A673 (cell line): ENCODE measurements at regions of chr10 and their contacts with region 1.

Region 1: DNA sequence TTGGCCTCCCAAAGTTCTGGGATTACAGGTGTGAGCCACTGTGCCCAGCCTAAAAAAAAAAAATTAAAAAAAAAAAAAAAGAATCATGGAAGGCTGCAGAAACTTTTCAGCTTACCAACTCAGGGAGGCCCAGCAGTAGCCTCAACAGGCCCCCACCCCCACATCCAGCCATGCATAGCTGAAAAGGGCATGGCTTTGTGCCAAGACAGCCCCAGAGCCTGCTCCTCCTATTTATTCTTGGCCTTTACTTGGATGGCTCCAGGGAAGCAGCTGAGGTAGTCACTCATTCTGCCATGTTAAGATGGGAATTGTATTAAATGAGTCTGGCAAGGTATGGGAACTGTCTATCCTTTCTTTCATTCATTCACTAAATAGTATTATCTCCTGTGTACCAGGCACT is 13.7 kb upstream of the CNNM2 start:
- DNase-seq: no peak
- H3K4me3 ChIP-seq: no peak overlapping the region
- H3K27ac ChIP-seq: no peak overlapping the region
- H3K4me1 ChIP-seq: no peaks in the 10 kb centered on the region
- H3K27me3 ChIP-seq: no peaks in the 10 kb centered on the region
- CTCF ChIP-seq: no peak

Region 2: DNA sequence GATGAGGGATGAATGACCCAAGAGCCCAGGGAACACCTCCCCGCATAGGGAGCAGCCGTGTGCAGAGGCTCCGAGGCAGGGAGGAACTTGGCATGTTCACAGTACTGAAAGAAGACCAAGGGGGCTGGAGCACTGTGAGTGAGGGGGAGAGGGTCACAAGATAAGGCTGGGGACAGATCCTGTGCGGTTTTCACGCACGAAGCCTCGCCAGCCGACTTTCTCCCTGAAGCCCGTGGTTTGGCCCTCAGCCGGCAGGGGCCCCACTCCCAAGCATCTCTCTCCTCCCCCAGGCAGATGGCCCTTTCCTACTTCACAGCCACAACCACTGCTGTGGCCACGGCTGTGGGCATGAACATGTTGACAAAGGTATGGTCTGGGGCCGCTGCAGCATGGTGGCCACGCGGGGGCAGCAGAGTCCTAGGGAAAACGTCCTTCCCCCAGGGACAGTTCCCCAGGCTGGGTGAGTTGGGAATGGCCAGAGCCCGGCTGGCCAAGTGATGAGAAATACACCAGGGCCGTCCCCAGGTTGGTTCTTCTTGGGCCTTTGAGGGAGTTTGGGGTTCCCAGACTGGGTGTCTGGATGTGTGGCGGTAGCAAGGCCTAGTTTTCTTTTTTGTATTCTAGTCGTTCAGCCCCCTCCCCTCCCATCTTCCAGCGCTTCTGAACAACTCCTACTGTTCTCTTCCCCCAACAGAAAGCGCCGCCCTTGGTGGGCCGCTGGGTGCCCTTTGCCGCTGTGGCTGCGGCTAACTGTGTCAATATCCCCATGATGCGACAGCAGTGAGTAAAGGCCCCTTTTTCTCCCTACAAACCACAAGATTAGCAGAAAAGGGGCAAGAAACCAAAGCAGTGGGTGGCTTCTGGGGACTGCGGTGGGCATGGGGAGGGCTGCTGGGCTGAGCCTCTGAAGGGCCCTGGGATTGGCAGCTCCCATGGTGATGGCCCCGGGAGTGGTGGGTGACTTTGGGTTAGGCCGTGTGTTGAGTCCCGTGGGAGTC is 175.0 kb before region 1 on chr10:
- CTCF ChIA-PET with region 1: no interaction called
- POLR2A ChIA-PET with region 1: no interaction called
- intact Hi-C with region 1: loop called (anchors 2 kb)
- DNase-seq: peak; percentile 78
- H3K4me3 ChIP-seq: no peak overlapping the region
- H3K27ac ChIP-seq: no peak overlapping the region
- H3K4me1 ChIP-seq: no peaks in the 10 kb centered on the region
- H3K27me3 ChIP-seq: no peaks in the 10 kb centered on the region
- CTCF ChIP-seq: peak; percentile 94

Region 3: DNA sequence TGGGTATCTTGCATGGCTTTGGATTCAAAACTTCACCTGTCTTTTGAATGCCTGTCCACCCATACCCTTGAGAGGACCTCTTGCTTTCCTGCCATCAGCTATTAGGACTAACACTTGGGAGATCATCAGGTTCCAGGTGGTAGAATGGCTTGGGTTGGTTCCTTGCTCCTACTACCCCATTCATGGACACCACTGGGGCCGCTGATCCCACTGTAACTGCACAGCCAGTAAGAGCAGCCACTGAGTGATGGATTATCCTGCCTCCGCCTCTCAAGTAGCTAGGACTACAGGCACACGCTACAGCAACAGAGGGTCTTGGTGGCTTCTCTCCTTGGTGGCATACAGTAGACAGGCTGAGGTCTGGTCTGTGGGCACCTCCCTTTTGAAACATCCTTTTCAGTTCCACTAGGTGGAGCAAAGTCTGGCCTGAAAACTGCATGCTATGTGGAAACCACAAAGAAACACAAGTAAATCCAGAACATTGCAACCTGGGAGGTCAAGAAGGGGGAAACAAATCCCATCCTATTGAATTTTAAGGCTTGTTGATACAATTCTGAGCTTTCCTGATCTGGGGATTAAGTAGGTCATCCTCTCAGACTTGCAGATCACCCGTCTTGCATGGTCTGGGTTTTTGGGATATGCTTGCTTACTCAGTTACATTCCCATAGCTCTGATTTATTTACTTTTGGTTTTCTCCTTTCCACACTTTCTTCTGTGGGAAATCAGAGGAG is 151.2 kb before region 1 on chr10:
- CTCF ChIA-PET with region 1: interaction called, 3 read pairs
- POLR2A ChIA-PET with region 1: no interaction called
- intact Hi-C with region 1: loop called (anchors 5 kb)
- DNase-seq: peak; percentile 67
- H3K4me3 ChIP-seq: no peak overlapping the region
- H3K27ac ChIP-seq: no peak overlapping the region
- H3K4me1 ChIP-seq: peaks cover 7% of the 10 kb centered on the region
- H3K27me3 ChIP-seq: no peaks in the 10 kb centered on the region
- CTCF ChIP-seq: peak; percentile 69

Region 4: DNA sequence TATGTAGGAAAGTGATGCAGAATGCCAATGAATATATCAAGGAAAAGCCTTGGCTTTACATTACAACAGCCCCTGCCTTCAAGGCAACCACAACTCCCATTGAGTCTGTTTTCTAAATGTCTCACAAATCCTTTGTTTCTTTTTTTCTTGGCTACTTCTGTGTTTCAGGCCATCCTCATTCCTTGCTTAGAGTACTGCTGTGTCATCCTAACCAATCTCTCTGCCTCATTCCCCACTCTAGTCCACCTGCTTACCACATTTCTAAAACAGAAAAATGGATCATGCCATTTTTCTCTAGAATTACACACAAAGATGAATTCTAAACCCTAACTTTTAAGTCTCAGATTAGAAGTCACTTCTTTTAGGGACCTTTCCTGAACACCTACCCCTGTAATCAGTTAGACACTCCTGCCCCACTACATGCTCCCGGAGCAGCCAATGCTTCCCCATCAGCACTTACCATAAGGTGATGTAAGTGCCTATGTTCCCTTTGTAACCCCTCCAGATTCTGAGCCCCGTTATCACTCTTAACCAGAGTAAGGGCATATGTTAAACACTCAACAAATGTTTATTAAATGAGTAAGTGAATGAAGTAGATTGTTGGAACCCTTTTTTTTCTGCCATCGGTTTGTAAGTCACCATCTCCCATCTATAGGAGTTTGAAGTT is 47.5 kb before region 1 on chr10:
- CTCF ChIA-PET with region 1: no interaction called
- POLR2A ChIA-PET with region 1: no interaction called
- intact Hi-C with region 1: loop called (anchors 1 kb)
- DNase-seq: no peak
- H3K4me3 ChIP-seq: no peak overlapping the region
- H3K27ac ChIP-seq: no peak overlapping the region
- H3K4me1 ChIP-seq: peaks cover 12% of the 10 kb centered on the region
- H3K27me3 ChIP-seq: no peaks in the 10 kb centered on the region
- CTCF ChIP-seq: no peak

Region 5: GRCh38 chr10:102917962-102918816 is 13.8 kb after region 1 on chr10 and contains the start of gene CNNM2:
- CTCF ChIA-PET with region 1: no interaction called
- POLR2A ChIA-PET with region 1: no interaction called
- intact Hi-C with region 1: no loop called
- DNase-seq: peak; percentile 100
- H3K4me3 ChIP-seq: peak within 1 kb of the TSS; percentile 98
- H3K27ac ChIP-seq: peak within 1 kb of the TSS; percentile 70
- H3K4me1 ChIP-seq: peaks cover 19% of the 10 kb centered on the region
- H3K27me3 ChIP-seq: no peaks in the 10 kb centered on the region
- CTCF ChIP-seq: no peak
- total RNA-seq, gene CNNM2: 4.8 and 5.6 TPM in 2 replicates

Region 6: DNA sequence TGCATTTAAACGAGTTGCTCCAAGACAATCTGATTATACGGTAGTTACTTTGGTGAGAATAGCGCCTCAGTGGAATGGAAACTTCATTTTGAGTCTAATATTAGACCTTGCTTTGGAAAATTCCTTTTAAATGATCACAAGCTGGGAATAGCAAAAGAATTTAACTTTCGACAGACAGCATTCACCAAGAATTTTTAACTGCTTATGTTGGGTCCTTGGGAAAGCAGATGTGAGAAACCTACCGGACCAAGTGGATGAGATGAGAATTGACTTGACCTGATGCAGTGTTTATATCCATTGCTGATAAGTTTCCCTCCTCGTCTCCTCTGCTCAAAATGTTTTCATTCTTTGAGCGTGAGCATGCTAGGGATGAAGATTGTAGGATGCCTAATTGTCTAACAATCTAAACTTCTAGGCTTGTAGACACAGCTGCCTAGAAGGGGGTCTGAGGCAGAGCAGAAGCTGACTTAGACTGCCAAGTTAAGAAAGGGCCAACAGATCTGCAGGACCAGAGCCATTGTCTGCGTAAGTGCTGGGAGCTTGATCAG is 140.7 kb after region 1 on chr10:
- CTCF ChIA-PET with region 1: no interaction called
- POLR2A ChIA-PET with region 1: no interaction called
- intact Hi-C with region 1: no loop called
- DNase-seq: peak; percentile 50
- H3K4me3 ChIP-seq: no peak overlapping the region
- H3K27ac ChIP-seq: no peak overlapping the region
- H3K4me1 ChIP-seq: peaks cover 16% of the 10 kb centered on the region
- H3K27me3 ChIP-seq: no peaks in the 10 kb centered on the region
- CTCF ChIP-seq: no peak